Mammary epithelial cell (primary cell): ENCODE measurements at regions of chr18 and their contacts with region 1.

Region 1: GRCh38 chr18:76398896-76399612 is 96.0 kb downstream of the ZNF516 start:
- DNase-seq: peak; percentile 58
- H3K4me3 ChIP-seq: no peak overlapping the region
- H3K27ac ChIP-seq: no peak overlapping the region
- H3K4me1 ChIP-seq: peaks cover 12% of the 10 kb centered on the region
- H3K27me3 ChIP-seq: no peaks in the 10 kb centered on the region
- CTCF ChIP-seq: peak; percentile 97 to 98

Region 2: DNA sequence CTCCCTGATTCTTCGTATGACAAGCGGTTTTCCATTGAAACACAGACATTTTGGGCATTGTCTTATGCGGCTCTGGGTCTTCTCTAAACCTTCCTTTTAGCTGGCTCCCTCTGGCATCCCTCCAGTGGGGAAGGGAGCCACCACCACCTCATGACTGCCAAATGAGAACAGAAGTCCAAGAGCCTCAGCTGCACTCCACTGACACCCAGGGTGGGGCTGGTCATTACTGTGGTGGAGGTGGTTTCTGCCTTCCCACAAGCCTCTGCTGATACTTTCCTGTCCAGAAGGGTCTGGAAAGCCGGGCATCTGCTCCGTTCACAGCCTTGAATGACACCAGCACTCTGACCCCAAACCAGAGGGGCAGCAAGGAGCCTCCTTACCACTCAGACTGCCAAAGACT is 117.5 kb before region 1 on chr18:
- CTCF ChIA-PET with region 1: no interaction called
- dilution Hi-C with region 1: no loop called
- in situ Hi-C with region 1: no loop called
- intact Hi-C with region 1: no loop called
- DNase-seq: no peak
- H3K4me3 ChIP-seq: no peak overlapping the region
- H3K27ac ChIP-seq: no peak overlapping the region
- H3K4me1 ChIP-seq: no peaks in the 10 kb centered on the region
- H3K27me3 ChIP-seq: no peaks in the 10 kb centered on the region
- CTCF ChIP-seq: no peak

Region 3: DNA sequence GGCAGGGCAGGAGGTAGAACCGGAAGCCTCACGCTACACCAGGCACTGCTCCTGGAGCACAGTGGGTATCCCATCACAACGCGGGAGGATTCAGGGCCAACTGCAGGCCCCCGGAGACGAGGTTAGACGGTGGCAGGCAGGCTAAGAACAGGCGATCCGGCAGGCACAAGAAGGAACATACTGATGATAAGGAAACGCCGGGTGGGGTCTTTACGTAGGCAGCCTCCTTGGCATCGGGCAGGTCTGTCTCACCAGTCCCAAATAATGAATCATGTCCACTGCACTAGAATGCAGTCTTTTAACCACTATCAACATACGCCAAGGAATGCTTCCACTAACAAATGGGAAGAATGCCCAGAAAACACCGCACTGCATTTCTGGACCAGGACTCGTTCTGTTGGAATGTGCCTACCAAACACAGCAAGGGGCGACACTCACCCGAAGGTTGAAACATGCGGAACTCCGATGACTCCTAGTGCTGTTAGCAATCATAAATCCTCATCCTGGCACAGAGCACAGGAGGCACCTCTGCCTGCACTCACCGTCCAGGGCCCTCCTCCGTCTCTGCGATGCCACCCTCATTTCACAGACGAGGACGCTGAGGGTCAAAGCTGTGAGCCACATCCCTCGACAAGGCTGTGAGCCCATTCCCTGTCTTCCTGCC is 60.8 kb after region 1 on chr18:
- CTCF ChIA-PET with region 1: no interaction called
- dilution Hi-C with region 1: no loop called
- in situ Hi-C with region 1: no loop called
- intact Hi-C with region 1: loop called (anchors 2 kb)
- DNase-seq: peak; percentile 99
- H3K4me3 ChIP-seq: peak overlapping the region; percentile 1 to 23 (median 18)
- H3K27ac ChIP-seq: peak overlapping the region; percentile 89
- H3K4me1 ChIP-seq: peaks cover 26% of the 10 kb centered on the region
- H3K27me3 ChIP-seq: no peaks in the 10 kb centered on the region
- CTCF ChIP-seq: peak in 1 of 2 donors; percentile 37

Region 4: DNA sequence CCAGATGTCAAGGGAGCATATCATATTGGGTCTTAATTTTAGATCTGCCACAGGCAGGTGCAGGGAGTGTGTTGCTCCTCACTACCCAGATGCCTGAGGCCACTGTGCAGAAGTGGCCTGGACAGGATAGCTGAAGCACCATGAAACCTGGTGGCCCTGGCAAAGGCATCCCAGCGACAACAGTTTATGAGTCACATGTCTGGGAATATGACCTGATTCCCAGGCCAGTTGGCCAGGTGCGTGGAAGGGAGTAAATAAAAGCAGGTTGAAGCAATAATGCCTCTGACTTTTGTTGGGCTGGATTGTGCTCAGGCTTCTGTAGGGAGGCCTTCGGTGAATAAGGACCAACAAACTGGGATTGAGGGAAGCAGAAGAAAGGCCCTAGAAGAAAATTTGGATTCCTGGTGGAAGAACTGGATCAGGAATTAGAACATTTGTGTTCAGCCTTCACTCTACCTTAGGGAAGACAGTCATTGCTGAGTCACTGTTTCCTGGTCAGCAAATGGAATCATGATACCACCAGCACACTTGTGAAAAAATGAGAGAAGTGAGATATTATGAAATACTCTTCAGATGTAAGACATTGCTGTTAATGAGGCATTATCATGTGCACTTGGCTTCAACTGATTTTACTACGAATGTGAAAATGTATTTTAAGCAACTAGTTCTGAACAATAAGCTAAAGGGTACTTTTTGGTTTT is 174.4 kb after region 1 on chr18:
- CTCF ChIA-PET with region 1: interaction called, 5 read pairs
- dilution Hi-C with region 1: no loop called
- in situ Hi-C with region 1: no loop called
- intact Hi-C with region 1: loop called (anchors 2 kb)
- DNase-seq: peak; percentile 87
- H3K4me3 ChIP-seq: no peak overlapping the region
- H3K27ac ChIP-seq: peak overlapping the region; percentile 46
- H3K4me1 ChIP-seq: peaks cover 12% of the 10 kb centered on the region
- H3K27me3 ChIP-seq: no peaks in the 10 kb centered on the region
- CTCF ChIP-seq: no peak

Region 5: DNA sequence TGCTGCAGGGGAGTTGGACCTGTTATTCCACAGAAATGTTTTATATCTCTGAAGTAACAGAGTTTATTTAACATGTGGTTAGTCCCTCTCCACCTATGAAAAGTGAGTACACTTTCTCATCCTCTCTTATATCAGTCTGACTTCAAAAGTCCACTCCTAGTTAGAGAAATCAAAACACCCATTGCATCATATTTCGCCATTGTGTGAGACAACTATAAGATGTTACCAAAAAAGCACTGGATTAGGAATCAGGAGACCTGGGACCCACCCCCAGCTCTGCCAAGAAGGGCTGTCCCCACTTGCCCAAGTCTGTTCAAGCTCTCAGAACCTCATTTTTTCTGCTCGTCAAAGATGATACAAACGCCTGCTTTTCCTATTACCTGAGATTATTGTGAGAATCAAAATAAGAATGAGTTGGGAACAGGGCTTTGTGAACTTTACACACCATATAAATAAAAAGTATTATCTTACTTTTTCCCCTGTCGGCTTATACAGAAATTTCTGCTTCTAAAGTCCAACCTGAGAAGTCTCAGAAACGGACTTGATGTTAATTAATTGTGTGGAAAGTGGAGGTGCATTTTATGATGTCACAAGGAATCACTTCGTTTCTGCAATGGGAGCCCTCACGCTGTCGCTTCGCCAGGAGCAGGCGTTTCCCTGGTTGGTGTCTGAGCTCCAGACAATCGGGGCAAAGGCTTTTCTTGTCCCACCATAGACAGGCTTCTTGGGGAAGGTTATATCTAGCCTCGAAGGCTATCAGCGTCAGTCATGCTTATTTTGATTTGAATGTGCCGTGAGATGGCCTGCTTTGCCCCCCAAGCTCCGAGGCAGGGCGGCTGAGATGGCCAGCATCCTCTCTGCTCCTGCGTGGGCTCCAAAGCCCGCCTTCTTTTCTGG is 185.6 kb after region 1 on chr18:
- CTCF ChIA-PET with region 1: no interaction called
- dilution Hi-C with region 1: no loop called
- in situ Hi-C with region 1: no loop called
- intact Hi-C with region 1: no loop called
- DNase-seq: no peak
- H3K4me3 ChIP-seq: no peak overlapping the region
- H3K27ac ChIP-seq: no peak overlapping the region
- H3K4me1 ChIP-seq: peaks cover 8% of the 10 kb centered on the region
- H3K27me3 ChIP-seq: no peaks in the 10 kb centered on the region
- CTCF ChIP-seq: no peak

Region 6: DNA sequence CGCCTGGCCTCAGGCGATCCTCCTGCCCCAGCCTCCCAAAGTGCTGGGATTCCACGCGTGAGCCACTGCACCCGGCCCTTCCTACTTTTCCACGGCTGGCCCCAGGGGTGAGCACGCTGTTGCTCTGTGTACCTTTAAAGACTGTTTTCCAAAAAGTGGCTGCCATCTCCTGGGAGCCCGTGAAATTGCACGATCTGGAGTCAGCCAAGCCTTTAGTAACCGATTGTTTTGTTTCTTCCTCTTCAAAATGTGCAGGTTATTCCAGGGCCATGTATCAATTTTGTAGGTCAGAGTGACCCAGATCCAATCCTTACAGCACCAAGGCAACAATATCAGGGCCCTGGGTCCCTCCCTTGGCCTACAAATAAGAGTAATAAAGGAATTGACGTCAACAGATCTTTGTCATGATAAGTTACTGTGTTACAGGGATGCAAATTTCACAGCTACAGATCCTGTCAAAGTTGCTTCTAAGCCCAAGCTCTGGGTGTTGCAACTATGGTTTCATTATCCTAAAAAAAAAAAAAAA is 287.7 kb after region 1 on chr18:
- CTCF ChIA-PET with region 1: interaction called, 4 read pairs
- dilution Hi-C with region 1: no loop called
- in situ Hi-C with region 1: loop called in 1 of 2 experiments (anchors 10 kb)
- intact Hi-C with region 1: loop called (anchors 1 kb)
- DNase-seq: peak; percentile 63
- H3K4me3 ChIP-seq: no peak overlapping the region
- H3K27ac ChIP-seq: peak overlapping the region; percentile 87
- H3K4me1 ChIP-seq: peaks cover 28% of the 10 kb centered on the region
- H3K27me3 ChIP-seq: no peaks in the 10 kb centered on the region
- CTCF ChIP-seq: peak; percentile 61 to 75

Region 7: DNA sequence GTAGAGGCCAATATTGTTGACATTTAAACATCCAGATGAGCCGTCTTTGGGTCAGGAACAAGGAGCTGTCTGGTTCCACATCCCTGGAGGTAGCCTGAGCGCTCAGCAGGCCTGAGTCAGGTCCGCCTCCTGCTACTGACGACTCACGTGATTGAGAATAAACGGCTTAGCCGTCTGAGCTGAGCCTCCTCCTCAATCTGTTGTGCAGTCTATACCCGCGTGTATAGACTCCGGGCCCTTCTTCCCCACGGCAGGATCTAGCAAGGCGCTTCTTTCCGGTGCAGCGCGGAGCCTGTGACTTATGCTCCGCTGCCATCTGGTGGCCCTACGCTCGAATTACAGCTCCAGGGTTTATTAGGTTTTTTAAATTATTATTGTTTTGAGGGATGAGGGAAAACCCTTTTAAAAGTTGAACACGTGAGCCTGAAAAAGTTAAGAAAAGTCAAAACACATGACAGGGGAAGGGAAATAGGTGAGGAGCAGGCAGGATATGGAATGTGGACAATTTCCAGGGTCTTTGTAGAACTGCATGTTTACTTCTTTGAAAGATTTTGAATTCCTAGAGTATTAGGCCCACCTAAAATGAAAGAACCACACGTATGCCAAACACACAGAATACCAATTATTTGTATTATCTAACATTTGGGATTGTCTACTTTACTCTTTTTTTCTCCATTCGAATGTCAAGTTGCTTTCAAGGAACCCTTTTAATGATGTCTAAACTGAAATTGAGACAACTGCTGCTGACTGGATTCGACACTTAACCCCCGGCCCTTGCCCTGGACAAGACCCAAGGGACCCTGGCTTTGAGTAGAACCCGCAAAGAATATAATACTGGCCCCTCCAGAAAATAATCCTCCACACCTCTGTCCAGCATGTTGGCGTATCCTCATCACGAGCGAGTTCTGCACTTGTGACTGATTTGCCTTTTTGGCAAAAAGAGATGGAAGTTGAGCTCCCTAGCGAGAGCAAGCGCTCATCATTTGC is 310.9 kb after region 1 on chr18:
- CTCF ChIA-PET with region 1: no interaction called
- dilution Hi-C with region 1: no loop called
- in situ Hi-C with region 1: loop called in 1 of 2 experiments (anchors 5 kb)
- intact Hi-C with region 1: loop called (anchors 1 kb)
- DNase-seq: peak; percentile 36
- H3K4me3 ChIP-seq: no peak overlapping the region
- H3K27ac ChIP-seq: no peak overlapping the region
- H3K4me1 ChIP-seq: no peaks in the 10 kb centered on the region
- H3K27me3 ChIP-seq: no peaks in the 10 kb centered on the region
- CTCF ChIP-seq: peak; percentile 86 to 91